K562 (cell line): ENCODE measurements at regions of chr1 and their contacts with region 1.

Region 1: GRCh38 chr1:28313710-28314546 is 14.9 kb upstream of the MED18 start:
- DNase-seq: peak in 3 of 4 experiments; percentile 42 to 72 (median 63)
- ATAC-seq: peak; percentile 96
- H3K4me3 ChIP-seq: no peak overlapping the region
- H3K27ac ChIP-seq: peak overlapping the region; percentile 20; the same call in 1 of the 3 replicates
- H3K4me1 ChIP-seq: peaks cover 10 to 11% of the 10 kb centered on the region in 2 experiments; a peak in 4 of 5 replicates
- H3K27me3 ChIP-seq: no peaks in the 10 kb centered on the region
- CTCF ChIP-seq: no peak
- EP300 ChIP-seq: no peak
- POLR2A ChIP-seq: no peak
- RAD21 ChIP-seq: no peak

Region 2: GRCh38 chr1:28266920-28267322 is 47.0 kb before region 1 on chr1:
- CTCF ChIA-PET with region 1: no interaction called
- POLR2A ChIA-PET with region 1: interaction called, 11 read pairs
- in situ Hi-C with region 1: no loop called
- intact Hi-C with region 1: no loop called
- DNase-seq: peak; percentile 76 to 94 (median 81)
- ATAC-seq: peak; percentile 85
- H3K4me3 ChIP-seq: no peak overlapping the region
- H3K27ac ChIP-seq: peak overlapping the region; percentile 71
- H3K4me1 ChIP-seq: peaks cover 44 to 56% of the 10 kb centered on the region in 2 experiments
- H3K27me3 ChIP-seq: no peaks in the 10 kb centered on the region
- CTCF ChIP-seq: no peak
- EP300 ChIP-seq: peak; percentile 86; the same call in 1 of the 2 replicates
- POLR2A ChIP-seq: no peak
- RAD21 ChIP-seq: no peak; a peak in 1 of 4 replicates